ENCODE measurements at regions of chr11 and their contacts with region 1.

Region 1: DNA sequence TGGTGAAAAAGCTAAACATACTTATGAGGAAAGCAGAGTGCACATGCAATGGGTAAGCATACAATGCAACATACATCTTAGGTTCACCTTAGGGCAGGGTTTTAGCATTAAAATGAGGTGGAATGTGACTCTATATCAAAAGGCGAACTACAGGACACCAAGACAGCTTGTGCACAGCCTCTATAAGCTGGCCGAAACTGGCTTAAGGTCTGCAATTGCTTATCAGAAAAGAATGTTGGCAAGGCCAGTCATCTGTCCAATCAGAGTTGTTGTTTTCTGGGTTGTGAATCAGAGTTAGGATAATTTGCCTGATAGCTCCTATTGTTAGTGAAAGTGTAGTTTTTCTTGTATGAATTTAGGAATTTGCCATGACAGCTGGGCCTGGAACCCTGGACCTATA is 76.5 kb downstream of the LRRC4C start:
- DNase-seq: no peak
- ATAC-seq: no peak
- H3K4me3 ChIP-seq: no peak overlapping the region
- H3K27ac ChIP-seq: no peak overlapping the region
- H3K4me1 ChIP-seq: no peaks in the 10 kb centered on the region
- H3K27me3 ChIP-seq: no peaks in the 10 kb centered on the region
- CTCF ChIP-seq: no peak

Region 2: DNA sequence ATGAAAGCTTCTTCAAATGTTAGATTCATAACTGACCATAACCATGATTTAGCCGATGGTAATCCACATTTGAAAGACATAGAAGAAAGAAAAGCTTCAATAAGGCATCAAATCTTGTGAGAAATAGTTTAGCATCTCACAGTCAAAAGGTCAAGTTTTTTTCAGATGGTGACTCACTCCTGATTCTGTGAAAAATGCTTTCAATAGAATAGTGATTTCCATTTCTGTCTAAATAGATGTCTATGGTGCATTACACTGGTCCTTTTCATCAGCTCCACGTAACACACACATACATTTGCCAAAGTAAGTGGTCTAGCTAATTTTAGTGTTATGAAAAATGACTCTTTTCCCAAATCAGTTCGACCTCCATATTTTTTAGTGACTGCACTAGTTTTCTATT is 62.7 kb before region 1 on chr11:
- intact Hi-C with region 1: loop called in 1 of 10 experiments (anchors 10 kb)
- DNase-seq: no peak
- ATAC-seq: no peak
- H3K4me3 ChIP-seq: no peak overlapping the region
- H3K27ac ChIP-seq: no peak overlapping the region
- H3K4me1 ChIP-seq: no peaks in the 10 kb centered on the region
- H3K27me3 ChIP-seq: no peaks in the 10 kb centered on the region
- CTCF ChIP-seq: no peak

Region 3: GRCh38 chr11:41498726-41499125 is 115.8 kb after region 1 on chr11:
- intact Hi-C with region 1: no loop called
- DNase-seq: no peak
- ATAC-seq: no peak
- H3K4me3 ChIP-seq: no peak overlapping the region
- H3K27ac ChIP-seq: no peak overlapping the region
- H3K4me1 ChIP-seq: no peaks in the 10 kb centered on the region
- H3K27me3 ChIP-seq: peaks cover 0 to 17% (median 0%) of the 10 kb centered on the region in 7 donors
- CTCF ChIP-seq: peak in 5 of 9 donors; percentile 8 to 35 (median 18)